Panc1 (cell line): ENCODE measurements at regions of chr21 and their contacts with region 1.

Region 1: DNA sequence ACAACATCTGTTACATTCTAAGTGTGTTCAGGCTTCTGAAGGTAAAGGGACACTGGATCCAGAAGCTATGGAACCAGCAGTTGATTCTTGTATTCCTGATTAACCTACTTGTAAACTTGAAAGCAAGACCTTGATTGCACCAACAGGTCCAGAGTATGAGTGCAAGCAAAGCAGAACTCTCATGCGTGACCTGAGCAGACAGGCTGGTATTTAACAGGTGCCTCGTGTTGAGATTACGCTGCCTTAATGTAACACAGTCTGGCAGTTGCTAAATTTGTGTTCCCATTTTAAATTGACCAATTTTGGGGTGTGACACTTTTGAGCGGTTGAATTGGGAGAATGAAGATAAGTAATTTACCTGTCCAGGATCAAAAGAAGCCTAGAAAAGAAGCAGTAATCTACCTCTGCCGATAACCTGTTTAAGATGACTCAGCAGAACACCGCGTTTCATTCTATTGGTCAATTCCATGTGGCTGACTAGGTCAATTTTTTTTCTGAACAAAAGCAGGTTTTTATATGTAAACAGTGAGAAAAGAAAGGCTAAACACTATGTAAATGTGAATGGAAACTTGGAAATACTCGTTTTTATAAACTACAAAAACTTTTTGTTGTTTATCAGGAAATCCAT is 147.6 kb downstream of the DYRK1A start:
- DNase-seq: no peak
- ATAC-seq: no peak
- H3K4me3 ChIP-seq: no peak overlapping the region
- H3K27ac ChIP-seq: no peak overlapping the region
- H3K4me1 ChIP-seq: no peaks in the 10 kb centered on the region
- H3K27me3 ChIP-seq: no peaks in the 10 kb centered on the region
- CTCF ChIP-seq: no peak

Region 2: DNA sequence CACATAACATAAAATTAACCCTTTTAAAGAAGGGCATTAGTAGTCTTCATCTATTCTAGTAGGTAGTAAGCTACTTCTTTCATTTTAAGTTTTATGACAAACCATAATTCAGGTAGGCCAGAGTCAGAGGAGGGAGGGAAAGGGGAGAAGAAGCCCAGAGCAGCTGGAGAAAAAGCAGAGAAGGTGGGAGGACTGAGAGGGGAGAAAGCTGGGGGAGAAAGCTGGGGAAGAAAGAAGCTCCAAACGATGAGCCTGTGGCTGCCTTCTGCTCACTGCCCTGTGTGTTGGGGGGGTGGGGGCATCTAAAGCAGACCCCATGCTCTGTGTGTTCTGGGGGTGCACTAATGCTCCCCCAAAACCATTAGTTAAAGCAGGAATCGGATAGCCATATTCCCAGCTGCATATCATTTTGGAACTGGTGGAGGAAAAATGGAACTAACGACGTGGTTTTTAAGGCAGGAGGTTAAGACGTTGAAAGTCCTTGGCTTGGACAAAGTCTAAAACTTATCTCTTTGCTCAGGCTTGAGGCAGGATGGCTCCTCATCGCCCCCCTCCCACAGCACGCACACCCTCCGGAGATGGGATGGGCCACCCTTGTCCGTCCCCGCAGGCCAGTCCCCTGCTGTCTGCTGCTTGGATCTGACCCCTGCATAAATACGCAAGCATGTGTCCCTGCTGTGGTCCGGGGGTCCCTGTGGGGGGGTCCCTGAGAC is 36.6 kb after region 1 on chr21:
- CTCF ChIA-PET with region 1: no interaction called
- POLR2A ChIA-PET with region 1: interaction called, 12 read pairs
- in situ Hi-C with region 1: no loop called
- intact Hi-C with region 1: no loop called
- DNase-seq: no peak
- ATAC-seq: no peak
- H3K4me3 ChIP-seq: peak overlapping the region in 1 of 2 experiments; percentile 18; a peak in 2 of 4 replicates
- H3K27ac ChIP-seq: peak overlapping the region; percentile 68
- H3K4me1 ChIP-seq: peaks cover 39% of the 10 kb centered on the region
- H3K27me3 ChIP-seq: no peaks in the 10 kb centered on the region
- CTCF ChIP-seq: no peak

Region 3: DNA sequence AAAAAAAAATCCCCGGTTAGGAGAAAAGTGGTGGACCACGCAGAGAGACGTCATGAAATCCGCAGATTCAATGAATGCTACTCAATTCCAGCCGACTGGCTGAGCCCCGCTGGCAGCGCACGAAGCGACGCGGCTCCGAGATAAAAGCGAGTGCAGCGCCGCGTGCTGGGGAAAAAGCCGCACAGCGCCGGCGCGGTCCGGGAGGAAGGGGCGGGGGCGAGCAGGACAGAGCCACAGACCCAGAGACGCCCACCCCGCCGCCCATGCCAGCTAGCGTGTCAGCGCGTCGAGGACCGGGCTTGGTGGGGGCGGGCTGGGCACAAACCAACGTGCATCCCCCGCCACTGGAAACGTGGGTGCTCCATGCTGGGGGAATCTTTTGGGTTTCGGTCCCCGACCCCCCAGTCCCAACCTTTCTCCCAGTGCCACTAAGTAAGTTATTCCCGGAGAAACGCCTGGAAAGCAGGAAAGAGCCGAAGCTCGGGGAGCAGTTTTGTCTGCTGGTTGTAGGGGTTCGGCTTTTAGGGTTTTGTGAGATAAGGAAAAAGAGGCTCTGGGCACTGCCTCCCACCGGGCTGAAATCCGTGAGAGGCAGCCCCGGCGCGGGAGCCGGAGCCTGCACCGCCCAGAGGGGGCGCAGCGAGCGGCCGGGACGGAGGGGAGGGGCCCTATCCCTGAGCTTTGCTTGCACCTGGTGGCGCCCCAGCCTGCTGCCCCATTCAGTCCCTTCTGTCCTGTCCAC is 402.3 kb after region 1 on chr21 and contains the start of gene KCNJ6:
- CTCF ChIA-PET with region 1: no interaction called
- POLR2A ChIA-PET with region 1: no interaction called
- in situ Hi-C with region 1: no loop called
- intact Hi-C with region 1: no loop called
- DNase-seq: no peak
- ATAC-seq: peak; percentile 87
- H3K4me3 ChIP-seq: 0 out of 4 replicates have a peak within 1 kb of the TSS, but pooled peaks of 1 of the 2 experiments have one; percentile 11
- H3K27ac ChIP-seq: no peak within 1 kb of the TSS
- H3K4me1 ChIP-seq: no peaks in the 10 kb centered on the region
- H3K27me3 ChIP-seq: peaks cover 6% of the 10 kb centered on the region
- CTCF ChIP-seq: peak; percentile 76
- total RNA-seq, gene KCNJ6: not detected